IMR-90 (cell line): ENCODE measurements at regions of chr5 and their contacts with region 1.

Region 1: DNA sequence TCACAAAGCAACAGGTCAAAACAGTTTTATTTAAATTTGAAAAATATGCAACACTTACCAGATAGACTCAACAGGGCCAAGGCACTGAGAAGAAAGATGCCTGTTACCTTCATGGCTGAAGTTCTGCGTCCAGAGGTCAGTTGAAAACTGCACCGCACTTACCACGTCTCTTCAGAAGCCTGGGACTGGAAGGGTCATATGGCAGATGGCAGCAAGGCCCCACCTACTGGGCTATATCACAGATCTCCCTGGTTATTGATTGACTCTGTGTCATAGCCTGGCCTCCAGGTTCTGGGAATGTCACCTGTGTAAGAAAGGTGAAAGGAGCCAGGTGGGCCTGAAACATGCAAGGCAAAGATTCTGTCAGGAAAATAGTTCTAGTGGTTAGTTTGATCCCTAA is at the start of gene SPINK1:
- DNase-seq: no peak
- ATAC-seq: no peak
- H3K4me3 ChIP-seq: no peak within 1 kb of the TSS
- H3K27ac ChIP-seq: no peak within 1 kb of the TSS
- H3K4me1 ChIP-seq: no peaks in the 10 kb centered on the region
- H3K27me3 ChIP-seq: peaks cover 2% of the 10 kb centered on the region; the same call in 1 of the 2 replicates
- CTCF ChIP-seq: no peak
- POLR2A ChIP-seq: no peak
- RAD21 ChIP-seq: no peak
- total RNA-seq, gene SPINK1: not detected in 2 replicates

Region 2: GRCh38 chr5:148163345-148163744 is 331.9 kb after region 1 on chr5:
- CTCF ChIA-PET with region 1: interaction called, 11 read pairs
- POLR2A ChIA-PET with region 1: no interaction called
- dilution Hi-C with region 1: no loop called
- in situ Hi-C with region 1: no loop called
- intact Hi-C with region 1: no loop called
- DNase-seq: no peak
- ATAC-seq: no peak
- H3K4me3 ChIP-seq: no peak overlapping the region
- H3K27ac ChIP-seq: no peak overlapping the region
- H3K4me1 ChIP-seq: no peaks in the 10 kb centered on the region
- H3K27me3 ChIP-seq: no peaks in the 10 kb centered on the region
- CTCF ChIP-seq: no peak
- POLR2A ChIP-seq: no peak
- RAD21 ChIP-seq: no peak